Heart left ventricle (tissue), 16 donors: ENCODE measurements at regions of chr10 and their contacts with region 1.

Region 1: GRCh38 chr10:132331526-132332432 is at the start of gene LRRC27:
- DNase-seq: peak; percentile 99 to 100 (median 99)
- ATAC-seq: peak; percentile 91 to 93 (median 93)
- H3K4me3 ChIP-seq: peak within 1 kb of the TSS; percentile 57 to 91 (median 84)
- H3K27ac ChIP-seq: peak within 1 kb of the TSS; percentile 19 to 94 (median 88)
- H3K4me1 ChIP-seq: peaks cover 4 to 52% (median 32%) of the 10 kb centered on the region in 12 donors
- H3K27me3 ChIP-seq: no peaks in the 10 kb centered on the region
- CTCF ChIP-seq: no peak
- POLR2A ChIP-seq: peak in 1 of 2 donors; percentile 23
- total RNA-seq, gene LRRC27: 2.6 to 8.9 (median 5.0) TPM

Region 2: DNA sequence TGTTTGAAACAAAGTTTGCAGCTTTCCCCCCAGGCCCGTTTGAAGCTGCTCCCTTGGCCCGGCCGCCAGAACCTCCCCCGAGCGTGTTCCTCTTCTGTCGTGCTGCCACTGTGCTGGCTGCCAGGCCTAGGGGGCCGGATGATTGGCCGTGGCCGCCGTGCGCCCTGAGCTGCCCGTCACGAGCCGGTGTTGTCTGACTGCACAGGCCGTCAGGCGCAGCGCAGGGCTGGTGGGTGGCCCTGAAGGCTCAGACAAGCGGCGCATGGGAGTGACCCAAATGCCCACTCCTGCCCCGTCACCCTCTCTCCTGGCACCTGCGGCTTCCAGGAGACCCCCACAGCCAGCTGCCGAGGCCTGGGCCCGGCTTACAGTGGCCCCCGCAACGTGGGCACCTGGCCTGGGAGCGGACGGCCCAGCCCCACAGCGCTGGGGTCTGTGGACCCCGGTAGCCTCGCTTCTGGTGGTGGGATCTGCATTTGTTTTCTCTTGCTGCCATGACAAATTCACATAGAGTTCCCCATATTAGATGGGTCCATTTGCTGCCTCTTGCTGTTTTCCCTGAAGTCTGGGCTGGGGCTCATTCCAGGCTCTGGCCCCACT is 252.9 kb before region 1 on chr10:
- intact Hi-C with region 1: no loop called
- DNase-seq: peak in 2 of 5 donors; percentile 34 to 48
- ATAC-seq: peak; percentile 61 to 95 (median 81)
- H3K4me3 ChIP-seq: no peak overlapping the region
- H3K27ac ChIP-seq: no peak overlapping the region
- H3K4me1 ChIP-seq: no peaks in the 10 kb centered on the region
- H3K27me3 ChIP-seq: no peaks in the 10 kb centered on the region
- CTCF ChIP-seq: no peak
- POLR2A ChIP-seq: no peak

Region 3: GRCh38 chr10:132307823-132308587 is 23.8 kb before region 1 on chr10 and contains the start of gene STK32C:
- intact Hi-C with region 1: loop called in 5 of 10 experiments (anchors 1 to 2 kb)
- DNase-seq: peak; percentile 92 to 96 (median 93)
- ATAC-seq: peak; percentile 95 to 97 (median 96)
- H3K4me3 ChIP-seq: peak within 1 kb of the TSS; percentile 53 to 98 (median 87)
- H3K27ac ChIP-seq: peak within 1 kb of the TSS in 11 of 12 donors; percentile 52 to 86 (median 71)
- H3K4me1 ChIP-seq: peaks cover 0 to 24% (median 15%) of the 10 kb centered on the region in 12 donors
- H3K27me3 ChIP-seq: no peaks in the 10 kb centered on the region
- CTCF ChIP-seq: no peak
- POLR2A ChIP-seq: peak in 1 of 2 donors; percentile 49
- total RNA-seq, gene STK32C: 3.8 to 9.8 (median 6.2) TPM

Region 4: GRCh38 chr10:132363921-132364593 is 32.3 kb after region 1 on chr10:
- intact Hi-C with region 1: no loop called
- DNase-seq: no peak
- ATAC-seq: peak; percentile 62 to 82 (median 66)
- H3K4me3 ChIP-seq: no peak overlapping the region
- H3K27ac ChIP-seq: no peak overlapping the region
- H3K4me1 ChIP-seq: no peaks in the 10 kb centered on the region
- H3K27me3 ChIP-seq: no peaks in the 10 kb centered on the region
- CTCF ChIP-seq: no peak
- POLR2A ChIP-seq: no peak